Caco-2 (cell line): ENCODE measurements at regions of chr4 and their contacts with region 1.

Region 1: DNA sequence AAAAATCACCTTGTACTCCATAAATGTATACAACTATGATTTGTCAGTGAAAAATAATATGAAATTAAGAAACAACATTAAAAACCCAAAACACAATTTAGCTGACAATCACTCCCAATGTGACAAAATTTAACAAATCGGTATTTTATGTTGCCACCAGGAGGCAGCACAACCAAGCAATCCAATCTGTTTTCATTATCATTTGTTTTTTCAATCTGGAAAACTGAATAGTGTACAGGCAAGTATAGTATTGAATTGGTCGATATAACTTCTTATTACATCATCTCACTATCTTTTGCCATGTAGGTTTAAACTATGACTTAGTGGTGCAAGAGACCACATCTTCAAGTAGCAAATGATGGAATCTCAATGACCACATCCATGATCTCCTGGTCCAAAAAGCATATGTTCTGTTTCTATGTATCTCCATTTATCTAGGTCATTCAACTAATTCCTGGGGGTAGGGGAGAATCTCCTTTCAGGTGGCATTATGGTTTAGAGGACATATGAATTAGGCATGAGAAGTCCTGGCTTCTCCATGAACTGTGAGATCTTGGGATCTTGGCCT is 112.9 kb upstream of the AGA start:
- DNase-seq: peak in 1 of 2 experiments; percentile 23
- H3K4me3 ChIP-seq: no peak overlapping the region
- H3K4me3 Mint-ChIP-seq: no peak overlapping the region
- H3K27ac Mint-ChIP-seq: no peak overlapping the region
- H3K4me1 ChIP-seq: no peaks in the 10 kb centered on the region
- H3K4me1 Mint-ChIP-seq: no peaks in the 10 kb centered on the region
- H3K27me3 ChIP-seq: no peaks in the 10 kb centered on the region
- H3K27me3 Mint-ChIP-seq: no peaks in the 10 kb centered on the region
- CTCF ChIP-seq: peak; percentile 25 to 48

Region 2: DNA sequence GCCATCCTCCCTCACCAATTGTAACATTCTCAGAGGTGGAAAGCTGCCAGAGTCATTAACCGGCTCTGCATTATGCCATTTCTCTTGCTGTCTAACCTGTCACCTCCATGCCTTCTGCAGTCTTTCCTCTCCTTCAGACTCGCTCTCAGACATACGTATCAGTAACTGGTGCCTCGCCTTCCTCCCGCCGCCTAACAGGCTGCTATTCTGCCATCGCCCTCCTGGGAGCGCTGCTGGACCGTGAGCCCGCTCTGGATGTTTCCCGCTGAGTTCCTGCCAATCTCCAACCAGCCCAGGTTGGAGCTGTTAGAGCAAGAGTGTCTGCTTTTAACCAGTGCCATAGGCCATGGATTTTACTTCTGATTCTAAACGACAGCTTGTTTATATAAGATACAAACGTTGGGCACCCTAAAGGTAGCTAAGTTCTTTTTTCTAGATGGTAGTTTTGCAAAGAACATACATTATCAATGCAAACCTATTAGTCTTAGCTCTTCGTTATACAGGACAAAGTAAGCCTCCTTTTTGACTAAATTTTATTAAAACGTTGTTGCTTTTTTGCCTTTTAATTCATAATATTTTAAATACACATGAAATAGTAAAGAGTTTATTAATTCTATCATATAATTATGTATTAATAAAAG is 304.9 kb before region 1 on chr4:
- CTCF ChIA-PET with region 1: no interaction called
- POLR2A ChIA-PET with region 1: no interaction called
- intact Hi-C with region 1: loop called (anchors 2 kb)
- DNase-seq: peak; percentile 54 to 76
- H3K4me3 ChIP-seq: no peak overlapping the region
- H3K4me3 Mint-ChIP-seq: no peak overlapping the region
- H3K27ac Mint-ChIP-seq: no peak overlapping the region
- H3K4me1 ChIP-seq: no peaks in the 10 kb centered on the region
- H3K4me1 Mint-ChIP-seq: no peaks in the 10 kb centered on the region
- H3K27me3 ChIP-seq: no peaks in the 10 kb centered on the region
- H3K27me3 Mint-ChIP-seq: peaks cover 12% of the 10 kb centered on the region
- CTCF ChIP-seq: peak; percentile 82 to 94

Region 3: DNA sequence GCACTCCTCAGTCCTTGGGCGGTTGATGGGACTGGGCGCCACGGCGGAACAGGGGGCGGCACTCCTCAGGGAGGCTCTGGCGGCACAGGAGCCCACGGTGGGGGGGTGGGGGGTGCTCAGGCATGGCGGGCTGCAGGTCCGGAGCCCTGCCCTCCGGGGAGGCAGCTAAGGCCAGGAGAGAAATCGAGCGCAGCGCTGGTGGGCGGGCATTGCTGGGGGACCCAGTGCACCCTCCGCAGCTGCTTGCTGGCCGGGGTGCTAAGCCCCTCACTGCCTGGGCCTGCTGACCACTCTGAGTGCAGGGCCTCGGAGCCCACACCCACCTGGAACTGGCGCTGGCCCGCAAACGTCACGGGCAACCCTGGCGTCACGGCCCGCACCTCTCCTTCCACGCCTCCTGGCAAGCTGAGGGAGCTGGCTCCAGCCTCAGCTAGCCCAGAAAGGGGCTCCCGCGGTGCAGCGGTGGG is 52.0 kb after region 1 on chr4:
- CTCF ChIA-PET with region 1: no interaction called
- POLR2A ChIA-PET with region 1: no interaction called
- intact Hi-C with region 1: no loop called
- DNase-seq: no peak
- H3K4me3 ChIP-seq: no peak overlapping the region
- H3K4me3 Mint-ChIP-seq: no peak overlapping the region
- H3K27ac Mint-ChIP-seq: no peak overlapping the region
- H3K4me1 ChIP-seq: no peaks in the 10 kb centered on the region
- H3K4me1 Mint-ChIP-seq: no peaks in the 10 kb centered on the region
- H3K27me3 ChIP-seq: no peaks in the 10 kb centered on the region
- H3K27me3 Mint-ChIP-seq: peaks cover 2% of the 10 kb centered on the region
- CTCF ChIP-seq: no peak

Region 4: GRCh38 chr4:177673985-177674489 is 118.9 kb after region 1 on chr4:
- CTCF ChIA-PET with region 1: no interaction called
- POLR2A ChIA-PET with region 1: no interaction called
- intact Hi-C with region 1: no loop called
- DNase-seq: no peak
- H3K4me3 ChIP-seq: no peak overlapping the region
- H3K4me3 Mint-ChIP-seq: no peak overlapping the region
- H3K27ac Mint-ChIP-seq: no peak overlapping the region
- H3K4me1 ChIP-seq: no peaks in the 10 kb centered on the region
- H3K4me1 Mint-ChIP-seq: no peaks in the 10 kb centered on the region
- H3K27me3 ChIP-seq: no peaks in the 10 kb centered on the region
- H3K27me3 Mint-ChIP-seq: no peaks in the 10 kb centered on the region
- CTCF ChIP-seq: no peak

Region 5: GRCh38 chr4:178275671-178276360 is 720.7 kb after region 1 on chr4:
- CTCF ChIA-PET with region 1: no interaction called
- POLR2A ChIA-PET with region 1: no interaction called
- intact Hi-C with region 1: loop called (anchors 10 kb)
- DNase-seq: no peak
- H3K4me3 ChIP-seq: no peak overlapping the region
- H3K4me3 Mint-ChIP-seq: no peak overlapping the region
- H3K27ac Mint-ChIP-seq: no peak overlapping the region
- H3K4me1 ChIP-seq: no peaks in the 10 kb centered on the region
- H3K4me1 Mint-ChIP-seq: no peaks in the 10 kb centered on the region
- H3K27me3 ChIP-seq: no peaks in the 10 kb centered on the region
- H3K27me3 Mint-ChIP-seq: no peaks in the 10 kb centered on the region
- CTCF ChIP-seq: peak in 1 of 2 experiments; percentile 2

Region 6: GRCh38 chr4:178395798-178396197 is 840.7 kb after region 1 on chr4:
- CTCF ChIA-PET with region 1: no interaction called
- POLR2A ChIA-PET with region 1: no interaction called
- intact Hi-C with region 1: loop called (anchors 2 kb)
- DNase-seq: peak in 1 of 2 experiments; percentile 17
- H3K4me3 ChIP-seq: no peak overlapping the region
- H3K4me3 Mint-ChIP-seq: no peak overlapping the region
- H3K27ac Mint-ChIP-seq: no peak overlapping the region
- H3K4me1 ChIP-seq: no peaks in the 10 kb centered on the region
- H3K4me1 Mint-ChIP-seq: no peaks in the 10 kb centered on the region
- H3K27me3 ChIP-seq: no peaks in the 10 kb centered on the region
- H3K27me3 Mint-ChIP-seq: no peaks in the 10 kb centered on the region
- CTCF ChIP-seq: peak in 1 of 2 experiments; percentile 42

Region 7: GRCh38 chr4:179307297-179308136 is 1752.4 kb after region 1 on chr4:
- CTCF ChIA-PET with region 1: no interaction called
- POLR2A ChIA-PET with region 1: no interaction called
- intact Hi-C with region 1: loop called (anchors 10 kb)
- DNase-seq: peak; percentile 34 to 58
- H3K4me3 ChIP-seq: no peak overlapping the region
- H3K4me3 Mint-ChIP-seq: no peak overlapping the region
- H3K27ac Mint-ChIP-seq: no peak overlapping the region
- H3K4me1 ChIP-seq: no peaks in the 10 kb centered on the region
- H3K4me1 Mint-ChIP-seq: no peaks in the 10 kb centered on the region
- H3K27me3 ChIP-seq: no peaks in the 10 kb centered on the region
- H3K27me3 Mint-ChIP-seq: no peaks in the 10 kb centered on the region
- CTCF ChIP-seq: peak; percentile 59 to 60